Activated CD8-positive, alpha-beta T cell treated with anti-CD3 and anti-CD28 coated beads, Interleukin-2, amount 10 ng/mL, durations not matched to agents 7 days and 5 days (primary cell): ENCODE measurements at regions of chr2 and their contacts with region 1.

Region 1: GRCh38 chr2:191218292-191218898 is 26.8 kb upstream of the MYO1B start:
- DNase-seq: peak; percentile 72
- ATAC-seq: peak; percentile 86
- H3K4me3 Mint-ChIP-seq: no peak overlapping the region
- H3K27ac Mint-ChIP-seq: no peak overlapping the region
- H3K4me1 Mint-ChIP-seq: peaks cover 24% of the 10 kb centered on the region
- H3K27me3 Mint-ChIP-seq: no peaks in the 10 kb centered on the region

Region 2: DNA sequence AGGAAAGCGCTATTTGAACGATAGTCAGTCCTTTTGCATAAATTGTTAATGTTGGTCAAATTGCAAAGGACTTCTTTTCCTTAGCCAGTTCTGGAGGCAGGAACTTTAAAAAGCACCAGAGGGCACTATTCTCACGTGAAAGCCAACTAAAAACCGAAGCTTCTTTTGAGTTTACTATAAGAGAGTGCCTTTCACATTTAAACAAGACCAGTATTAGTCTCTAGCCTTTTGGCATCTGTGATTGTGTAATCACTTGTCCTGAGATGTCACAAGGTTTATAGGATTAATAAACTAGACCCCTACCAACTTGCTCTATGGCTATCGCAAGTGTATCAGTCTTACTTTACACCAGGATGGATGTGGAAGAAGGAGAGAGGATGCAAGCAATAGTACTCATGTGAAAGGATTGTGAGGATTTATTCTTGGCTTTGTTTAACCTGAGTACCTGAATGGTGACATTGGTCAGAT is 53.2 kb before region 1 on chr2:
- CTCF ChIA-PET with region 1: interaction called, 30 read pairs
- POLR2A ChIA-PET with region 1: no interaction called
- DNase-seq: peak; percentile 47
- ATAC-seq: peak; percentile 87
- H3K4me3 Mint-ChIP-seq: no peak overlapping the region
- H3K27ac Mint-ChIP-seq: no peak overlapping the region
- H3K4me1 Mint-ChIP-seq: peaks cover 22% of the 10 kb centered on the region
- H3K27me3 Mint-ChIP-seq: peaks cover 12% of the 10 kb centered on the region

Region 3: GRCh38 chr2:191171708-191172355 is 46.6 kb before region 1 on chr2:
- CTCF ChIA-PET with region 1: interaction called, 30 read pairs
- POLR2A ChIA-PET with region 1: no interaction called
- DNase-seq: no peak
- ATAC-seq: no peak
- H3K4me3 Mint-ChIP-seq: no peak overlapping the region
- H3K27ac Mint-ChIP-seq: no peak overlapping the region
- H3K4me1 Mint-ChIP-seq: peaks cover 59% of the 10 kb centered on the region
- H3K27me3 Mint-ChIP-seq: no peaks in the 10 kb centered on the region

Region 4: GRCh38 chr2:191195021-191195420 is 23.4 kb before region 1 on chr2:
- CTCF ChIA-PET with region 1: interaction called, 19 read pairs
- POLR2A ChIA-PET with region 1: interaction called, 5 read pairs
- DNase-seq: no peak
- ATAC-seq: no peak
- H3K4me3 Mint-ChIP-seq: no peak overlapping the region
- H3K27ac Mint-ChIP-seq: peak overlapping the region; percentile 97
- H3K4me1 Mint-ChIP-seq: peaks cover 45% of the 10 kb centered on the region
- H3K27me3 Mint-ChIP-seq: no peaks in the 10 kb centered on the region

Region 5: DNA sequence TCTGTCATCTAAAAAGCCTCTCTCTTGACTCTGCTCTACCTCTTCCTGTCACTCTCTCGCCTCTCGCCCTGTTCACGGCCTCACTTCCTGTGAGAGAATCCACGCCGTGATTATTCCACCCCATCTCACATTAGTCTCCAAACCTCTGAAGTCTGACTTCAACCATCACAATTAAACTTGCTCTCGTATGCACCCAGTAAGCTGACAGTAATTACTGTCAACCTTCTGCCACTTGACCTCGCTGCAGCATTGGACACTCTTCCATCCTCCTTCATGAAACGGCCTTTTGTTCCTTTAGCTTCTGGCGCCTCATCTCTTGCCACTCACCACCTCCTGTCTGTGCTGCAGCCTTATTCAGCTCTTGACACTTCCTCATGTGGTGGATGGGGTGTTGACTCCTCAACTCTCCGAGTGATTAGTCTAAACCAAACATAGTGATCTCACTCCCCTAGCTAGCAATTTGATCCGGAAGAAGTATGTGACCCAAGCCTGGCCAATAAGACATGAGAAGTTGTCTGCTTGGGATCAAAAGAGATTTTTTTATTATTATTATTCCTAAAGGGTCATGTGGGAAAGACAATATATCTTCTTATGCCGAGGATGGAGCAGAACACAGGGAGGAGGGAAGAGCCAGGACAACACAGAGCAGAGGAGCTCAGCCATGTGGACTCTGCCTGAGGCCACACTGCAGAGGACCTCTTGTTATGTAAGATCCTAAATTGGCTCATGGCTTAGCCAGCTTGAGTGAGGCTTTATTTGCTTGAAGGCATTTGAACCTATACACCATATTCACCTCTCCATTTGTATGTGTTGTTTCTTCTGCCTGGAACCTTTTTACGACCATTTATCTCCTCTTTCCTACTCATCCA is 11.5 kb before region 1 on chr2:
- CTCF ChIA-PET with region 1: interaction called, 55 read pairs
- POLR2A ChIA-PET with region 1: no interaction called
- DNase-seq: peak; percentile 57
- ATAC-seq: peak; percentile 69
- H3K4me3 Mint-ChIP-seq: peak overlapping the region; percentile 52
- H3K27ac Mint-ChIP-seq: peak overlapping the region; percentile 87
- H3K4me1 Mint-ChIP-seq: peaks cover 41% of the 10 kb centered on the region
- H3K27me3 Mint-ChIP-seq: no peaks in the 10 kb centered on the region

Region 6: GRCh38 chr2:191252699-191253098 is 34.3 kb after region 1 on chr2:
- CTCF ChIA-PET with region 1: interaction called, 11 read pairs
- POLR2A ChIA-PET with region 1: no interaction called
- DNase-seq: no peak
- ATAC-seq: no peak
- H3K4me3 Mint-ChIP-seq: no peak overlapping the region
- H3K27ac Mint-ChIP-seq: no peak overlapping the region
- H3K4me1 Mint-ChIP-seq: no peaks in the 10 kb centered on the region
- H3K27me3 Mint-ChIP-seq: peaks cover 5% of the 10 kb centered on the region